Heart right ventricle (tissue), 16 donors: ENCODE measurements at regions of chr1 and their contacts with region 1.

Region 1: DNA sequence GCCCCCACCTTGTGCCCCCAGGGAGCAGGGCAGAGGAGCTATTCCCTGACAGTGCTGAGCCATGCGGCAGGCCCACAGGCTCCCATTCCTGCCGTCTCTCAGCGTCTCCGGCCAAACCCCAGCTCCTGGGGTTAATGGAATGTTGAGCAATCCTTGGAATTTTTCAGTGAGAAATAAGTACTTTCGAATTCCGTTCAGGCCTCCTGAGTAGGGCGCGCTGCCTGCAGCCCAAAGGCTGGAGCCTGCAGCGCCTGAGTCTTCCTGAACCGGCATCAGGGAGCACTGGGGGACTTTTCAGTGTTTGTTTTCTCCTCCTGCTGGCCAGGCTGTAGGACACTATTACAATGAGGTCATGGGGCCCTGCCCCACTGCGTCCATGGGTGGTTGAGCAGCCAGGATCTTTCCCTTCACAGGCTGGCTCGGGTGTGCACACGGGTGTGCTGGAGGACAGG is 33.3 kb upstream of the CSF1 start:
- DNase-seq: peak; percentile 66 to 68
- ATAC-seq: peak; percentile 85 to 94 (median 89)
- H3K4me3 ChIP-seq: peak overlapping the region in 5 of 10 donors; percentile 9 to 24 (median 15)
- H3K27ac ChIP-seq: peak overlapping the region; percentile 19 to 92 (median 84)
- H3K4me1 ChIP-seq: peaks cover 0 to 59% (median 24%) of the 10 kb centered on the region in 9 donors
- H3K27me3 ChIP-seq: no peaks in the 10 kb centered on the region
- CTCF ChIP-seq: peak in 7 of 9 donors; percentile 9 to 51 (median 24)

Region 2: GRCh38 chr1:109816175-109816811 is 61.1 kb before region 1 on chr1:
- intact Hi-C with region 1: loop called in 1 of 10 experiments (anchors 10 kb)
- DNase-seq: no peak
- ATAC-seq: peak in 4 of 8 donors; percentile 18 to 43 (median 32)
- H3K4me3 ChIP-seq: no peak overlapping the region
- H3K27ac ChIP-seq: peak overlapping the region in 1 of 10 donors; percentile 2
- H3K4me1 ChIP-seq: peaks cover 2 to 65% (median 20%) of the 10 kb centered on the region in 9 donors
- H3K27me3 ChIP-seq: no peaks in the 10 kb centered on the region
- CTCF ChIP-seq: no peak

Region 3: DNA sequence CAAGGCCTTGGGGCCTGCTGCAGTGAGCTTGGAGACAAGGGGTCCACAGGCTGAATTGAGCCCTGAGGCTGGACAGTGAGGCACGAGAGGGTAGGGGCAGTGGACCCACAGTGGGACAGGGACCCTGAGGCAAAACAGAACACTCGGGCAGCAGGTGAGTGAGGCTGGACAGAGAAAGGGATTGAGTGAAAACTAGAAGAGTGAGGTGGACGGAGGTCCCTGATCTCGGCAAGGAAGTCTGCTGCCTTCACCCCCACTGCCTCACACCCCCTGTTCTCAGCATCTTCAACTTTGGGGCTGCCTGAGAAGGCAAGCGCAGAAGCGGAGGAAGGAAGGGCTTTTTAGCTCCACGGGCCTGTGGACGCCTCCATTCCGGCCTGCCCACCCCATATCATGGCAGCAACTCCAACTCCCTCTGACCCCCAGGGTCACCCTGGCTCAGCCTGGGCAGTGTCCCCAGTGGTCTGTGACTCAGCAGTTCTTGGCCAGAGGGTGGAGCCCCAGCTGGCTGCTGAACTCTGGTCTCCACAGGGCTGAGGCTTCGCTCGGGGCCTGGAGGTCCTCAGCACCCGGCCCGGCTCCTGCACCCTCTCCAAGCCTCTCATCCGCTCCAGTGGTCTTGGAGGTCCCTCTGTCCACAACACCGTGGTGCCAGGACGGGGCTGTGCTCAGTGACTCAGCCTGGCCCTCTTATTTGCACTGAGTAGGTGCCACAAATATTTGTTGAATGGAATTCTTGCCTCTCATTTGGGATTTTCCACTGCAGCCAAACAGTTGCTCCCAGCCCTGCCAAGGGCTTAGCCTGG is 53.6 kb before region 1 on chr1:
- intact Hi-C with region 1: loop called in 2 of 10 experiments (anchors 1 to 10 kb)
- DNase-seq: peak in 1 of 2 donors; percentile 60
- ATAC-seq: peak in 7 of 8 donors; percentile 41 to 72 (median 53)
- H3K4me3 ChIP-seq: no peak overlapping the region
- H3K27ac ChIP-seq: peak overlapping the region in 3 of 10 donors; percentile 7 to 79 (median 34)
- H3K4me1 ChIP-seq: peaks cover 14 to 90% (median 52%) of the 10 kb centered on the region in 9 donors
- H3K27me3 ChIP-seq: no peaks in the 10 kb centered on the region
- CTCF ChIP-seq: no peak